Gastrocnemius medialis (tissue), 4 donors: ENCODE measurements at regions of chr6 and their contacts with region 1.

Region 1: DNA sequence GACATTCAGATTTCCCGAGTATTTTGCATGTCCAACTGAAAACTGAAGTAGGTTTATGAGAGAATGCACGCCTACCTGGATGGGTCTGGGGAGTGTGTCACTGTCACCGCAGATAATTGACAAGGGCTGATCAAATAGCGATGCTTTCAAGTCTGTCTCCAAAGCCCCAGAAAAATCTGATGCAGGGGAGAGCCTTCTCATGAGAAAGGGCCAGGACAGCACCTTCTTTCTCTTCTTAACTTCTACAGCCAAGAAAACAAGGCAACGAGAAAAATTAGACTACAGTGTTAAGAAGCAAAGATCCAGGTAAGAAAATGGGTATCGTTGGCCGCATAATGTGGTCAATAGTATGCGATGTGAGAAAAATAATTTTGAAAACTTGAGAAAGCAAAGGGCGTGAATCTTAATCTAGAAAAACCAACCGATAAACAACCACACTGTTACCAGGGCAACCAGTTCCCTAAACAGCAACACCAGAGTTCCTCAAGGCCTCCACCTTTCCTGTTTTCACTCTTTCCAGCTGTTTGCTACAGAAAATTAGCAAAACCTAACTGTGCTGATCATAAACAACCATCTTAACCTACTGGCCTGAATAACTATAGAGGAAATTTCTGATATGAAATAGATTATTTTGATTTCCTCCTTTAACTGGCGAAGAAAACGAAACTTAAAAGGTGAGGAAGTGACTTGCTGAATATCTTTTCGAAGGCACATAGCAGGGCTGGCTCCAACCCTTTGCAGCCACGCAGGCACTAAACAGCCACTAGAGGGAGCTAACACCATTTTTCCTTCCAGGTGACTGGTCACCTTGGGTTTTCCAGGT is 2.6 kb downstream of the TAGAP start:
- DNase-seq: peak; percentile 30 to 53
- ATAC-seq: peak; percentile 82 to 87
- H3K4me3 ChIP-seq: peak overlapping the region in 1 of 4 donors; percentile 13
- H3K27ac ChIP-seq: no peak overlapping the region
- H3K4me1 ChIP-seq: peaks cover 0 to 4% of the 10 kb centered on the region in 2 donors
- H3K27me3 ChIP-seq: no peaks in the 10 kb centered on the region
- CTCF ChIP-seq: peak; percentile 76 to 93 (median 79)
- POLR2A ChIP-seq: no peak

Region 2: GRCh38 chr6:159094444-159095252 is 52.4 kb after region 1 on chr6:
- in situ Hi-C with region 1: no loop called
- intact Hi-C with region 1: no loop called
- DNase-seq: no peak
- ATAC-seq: no peak
- H3K4me3 ChIP-seq: no peak overlapping the region
- H3K27ac ChIP-seq: no peak overlapping the region
- H3K4me1 ChIP-seq: no peaks in the 10 kb centered on the region
- H3K27me3 ChIP-seq: no peaks in the 10 kb centered on the region
- CTCF ChIP-seq: no peak
- POLR2A ChIP-seq: no peak

Region 3: DNA sequence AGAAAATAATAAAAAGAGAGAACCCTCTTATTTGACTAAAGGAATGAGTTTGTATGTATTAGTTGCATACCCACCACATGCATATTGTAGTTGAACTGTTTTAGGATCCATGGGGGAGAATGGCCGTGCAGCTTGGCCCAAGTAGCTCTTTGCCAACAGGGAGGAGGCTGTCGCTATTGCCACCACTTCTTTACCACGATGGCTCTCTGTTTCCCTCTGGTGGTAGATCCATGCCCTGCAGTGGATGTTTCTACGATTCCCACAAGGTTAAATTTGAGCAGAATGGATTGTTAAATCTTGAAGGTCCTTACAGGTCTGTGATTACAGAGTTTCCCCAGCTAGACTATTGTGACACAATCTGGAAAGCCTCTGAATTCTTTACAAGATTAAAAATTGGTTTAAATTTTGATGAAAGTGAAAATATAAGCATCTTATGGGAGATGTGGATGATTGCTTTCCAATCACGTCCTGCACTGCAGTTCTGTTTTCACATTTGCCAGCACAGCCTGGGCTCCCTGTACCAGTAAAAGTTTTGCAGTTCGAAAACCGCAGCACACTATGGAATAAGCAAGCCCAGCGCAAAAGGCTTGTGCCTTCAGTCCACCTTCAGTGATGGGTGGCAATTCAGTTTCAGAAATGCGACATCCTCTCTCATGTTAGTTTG is 92.6 kb after region 1 on chr6:
- in situ Hi-C with region 1: loop called (anchors 5 to 10 kb)
- intact Hi-C with region 1: loop called (anchors 1 kb)
- DNase-seq: peak; percentile 36 to 57
- ATAC-seq: peak; percentile 84 to 86
- H3K4me3 ChIP-seq: no peak overlapping the region
- H3K27ac ChIP-seq: no peak overlapping the region
- H3K4me1 ChIP-seq: no peaks in the 10 kb centered on the region
- H3K27me3 ChIP-seq: no peaks in the 10 kb centered on the region
- CTCF ChIP-seq: peak; percentile 84 to 95 (median 89)
- POLR2A ChIP-seq: no peak